ENCODE measurements at regions of chr17 and their contacts with region 1.

Region 1: GRCh38 chr17:82648166-82648668 is at the start of gene WDR45B:
- DNase-seq: peak; percentile 95
- ATAC-seq: peak; percentile 88
- H3K4me3 Mint-ChIP-seq: peak within 1 kb of the TSS; percentile 82
- H3K27ac Mint-ChIP-seq: peak within 1 kb of the TSS; percentile 65
- H3K4me1 Mint-ChIP-seq: peaks cover 24% of the 10 kb centered on the region
- H3K27me3 Mint-ChIP-seq: no peaks in the 10 kb centered on the region
- total RNA-seq, gene WDR45B: 74.1 to 74.8 TPM

Region 2: DNA sequence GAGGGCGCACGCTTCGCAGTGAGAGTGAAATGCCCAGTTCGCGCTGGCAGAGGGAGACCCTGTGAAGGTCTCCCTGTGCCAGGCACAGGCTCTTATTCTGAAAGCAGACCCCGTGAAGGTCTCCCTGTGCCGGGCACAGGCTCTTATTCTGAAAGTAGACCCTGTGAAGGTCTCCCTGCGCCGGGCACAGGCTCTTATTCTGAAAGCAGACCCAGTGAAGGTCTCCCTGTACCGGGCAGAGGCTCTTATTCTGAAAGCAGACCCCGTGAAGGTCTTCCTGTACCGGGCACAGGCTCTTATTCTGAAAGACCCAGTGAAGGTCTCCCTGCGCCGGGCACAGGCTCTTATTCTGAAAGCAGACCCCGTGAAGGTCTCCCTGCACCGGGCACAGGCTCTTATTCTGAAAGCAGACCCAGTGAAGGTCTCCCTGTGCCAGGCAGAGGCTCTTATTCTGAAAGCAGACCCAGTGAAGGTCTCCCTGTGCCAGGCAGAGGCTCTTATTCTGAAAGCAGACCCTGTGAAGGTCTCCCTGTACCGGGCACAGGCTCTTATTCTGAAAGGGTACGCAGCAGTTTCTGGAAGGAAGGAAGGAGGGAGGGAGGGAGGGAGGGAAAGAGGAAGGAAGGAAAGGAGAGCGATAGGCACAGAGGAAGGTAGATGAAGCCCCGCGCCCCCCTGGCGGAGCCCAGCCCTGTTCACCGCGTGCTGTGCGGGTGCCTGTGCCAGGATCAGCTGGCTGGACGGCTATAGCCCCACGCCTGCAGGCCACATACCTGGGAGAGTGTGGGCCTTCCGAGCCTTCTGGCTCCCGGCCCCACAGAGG is 55.2 kb before region 1 on chr17:
- CTCF ChIA-PET with region 1: no interaction called
- POLR2A ChIA-PET with region 1: no interaction called
- intact Hi-C with region 1: loop called (anchors 1 to 5 kb)
- DNase-seq: peak; percentile 76
- ATAC-seq: peak; percentile 25
- H3K4me3 Mint-ChIP-seq: peak overlapping the region; percentile 71
- H3K27ac Mint-ChIP-seq: peak overlapping the region; percentile 98
- H3K4me1 Mint-ChIP-seq: peaks cover 45% of the 10 kb centered on the region
- H3K27me3 Mint-ChIP-seq: no peaks in the 10 kb centered on the region

Region 3: DNA sequence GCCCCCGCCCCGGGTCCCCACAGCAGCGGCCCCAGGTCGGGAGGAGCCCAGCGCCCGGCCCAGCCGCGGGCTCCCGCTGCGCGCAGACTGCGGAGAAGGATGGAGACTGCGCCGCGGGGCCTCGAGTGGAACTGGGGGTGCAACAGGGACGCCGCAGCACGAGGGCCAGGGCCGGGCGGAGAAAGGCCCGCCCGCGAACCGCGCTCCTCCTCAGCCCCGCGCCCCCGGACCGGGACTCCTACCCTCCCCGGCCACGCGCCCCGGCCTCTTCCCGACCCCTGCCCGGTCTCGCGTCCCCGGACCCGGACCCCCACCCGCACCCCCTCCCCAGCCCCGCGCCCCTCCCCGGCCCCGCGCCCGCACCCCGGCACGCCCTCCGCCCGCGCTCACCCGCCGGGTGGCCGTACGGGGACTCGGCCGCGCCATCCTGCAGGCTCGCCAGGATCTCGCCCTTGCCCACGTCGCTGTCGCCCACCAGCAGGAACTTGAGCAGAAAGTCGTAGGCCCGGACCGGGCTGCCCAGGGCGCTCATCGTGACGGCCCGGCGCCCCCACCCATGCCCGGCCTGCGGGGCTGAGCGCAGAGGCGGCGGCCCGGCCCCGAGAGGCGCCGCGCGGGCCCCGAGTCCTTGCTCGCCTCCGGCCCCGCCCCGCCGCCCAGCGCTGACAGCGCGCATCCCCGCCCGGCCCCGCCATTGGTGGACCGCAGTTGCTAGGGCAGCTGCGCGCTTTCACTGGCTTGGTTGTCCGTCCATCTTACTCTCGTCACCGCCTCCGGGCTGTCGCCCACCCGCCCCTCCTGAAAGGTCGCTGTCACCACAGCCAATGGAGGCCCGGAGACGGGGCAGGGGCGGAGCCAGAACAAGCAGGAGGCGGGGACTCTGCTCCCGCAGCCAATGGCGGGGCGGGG is 50.1 kb after region 1 on chr17 and contains the start of gene RAB40B:
- CTCF ChIA-PET with region 1: no interaction called
- POLR2A ChIA-PET with region 1: no interaction called
- intact Hi-C with region 1: loop called (anchors 1 kb)
- DNase-seq: peak; percentile 99
- ATAC-seq: peak; percentile 99
- H3K4me3 Mint-ChIP-seq: peak within 1 kb of the TSS; percentile 67
- H3K27ac Mint-ChIP-seq: peak within 1 kb of the TSS; percentile 51
- H3K4me1 Mint-ChIP-seq: peaks cover 10% of the 10 kb centered on the region
- H3K27me3 Mint-ChIP-seq: peaks cover 3% of the 10 kb centered on the region
- total RNA-seq, gene RAB40B: 3.2 to 4.1 TPM

Region 4: DNA sequence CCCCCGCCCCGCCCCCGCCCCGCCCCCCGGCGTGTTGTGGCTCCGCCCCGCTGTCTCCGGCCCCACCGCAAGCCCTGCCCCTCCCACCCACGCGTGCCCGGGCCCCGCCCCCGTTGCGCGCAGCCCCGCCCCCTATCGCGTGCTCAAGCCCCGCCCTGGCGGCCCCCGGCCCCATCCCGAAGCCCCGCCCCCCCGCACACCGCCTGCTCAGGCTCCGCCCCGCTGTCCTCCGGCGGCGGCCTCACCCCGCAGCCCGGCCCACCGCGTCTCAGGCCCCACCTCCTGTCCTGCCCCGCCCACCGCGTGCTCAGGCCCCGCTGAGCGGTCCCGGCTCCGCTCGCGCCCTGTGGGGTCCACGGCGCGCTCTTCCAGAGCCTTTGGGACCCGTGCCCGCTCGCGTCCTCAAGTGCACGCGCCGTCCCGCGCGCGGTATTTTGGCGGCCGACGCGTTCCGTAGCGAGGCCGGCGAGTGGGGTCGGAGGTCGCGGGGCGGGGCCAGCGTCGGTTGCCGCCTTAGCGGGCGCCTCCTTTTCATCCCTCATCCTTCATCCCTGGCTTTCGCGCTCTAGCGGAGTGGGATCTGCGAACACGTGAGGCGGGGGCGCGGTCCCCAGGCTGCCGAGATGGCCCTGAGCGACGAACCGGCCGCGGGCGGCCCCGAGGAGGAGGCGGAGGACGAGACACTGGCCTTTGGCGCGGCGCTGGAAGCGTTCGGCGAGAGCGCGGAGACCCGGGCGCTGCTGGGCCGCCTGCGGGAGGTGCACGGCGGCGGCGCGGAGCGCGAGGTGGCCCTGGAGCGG is 103.6 kb after region 1 on chr17 and contains the start of gene TBCD:
- CTCF ChIA-PET with region 1: no interaction called
- POLR2A ChIA-PET with region 1: no interaction called
- intact Hi-C with region 1: loop called (anchors 1 to 2 kb)
- DNase-seq: peak; percentile 95
- ATAC-seq: peak; percentile 83
- H3K4me3 Mint-ChIP-seq: peak within 1 kb of the TSS; percentile 84
- H3K27ac Mint-ChIP-seq: peak within 1 kb of the TSS; percentile 13
- H3K4me1 Mint-ChIP-seq: peaks cover 26% of the 10 kb centered on the region
- H3K27me3 Mint-ChIP-seq: no peaks in the 10 kb centered on the region
- total RNA-seq, gene TBCD: 83.3 to 97.2 TPM

Region 5: DNA sequence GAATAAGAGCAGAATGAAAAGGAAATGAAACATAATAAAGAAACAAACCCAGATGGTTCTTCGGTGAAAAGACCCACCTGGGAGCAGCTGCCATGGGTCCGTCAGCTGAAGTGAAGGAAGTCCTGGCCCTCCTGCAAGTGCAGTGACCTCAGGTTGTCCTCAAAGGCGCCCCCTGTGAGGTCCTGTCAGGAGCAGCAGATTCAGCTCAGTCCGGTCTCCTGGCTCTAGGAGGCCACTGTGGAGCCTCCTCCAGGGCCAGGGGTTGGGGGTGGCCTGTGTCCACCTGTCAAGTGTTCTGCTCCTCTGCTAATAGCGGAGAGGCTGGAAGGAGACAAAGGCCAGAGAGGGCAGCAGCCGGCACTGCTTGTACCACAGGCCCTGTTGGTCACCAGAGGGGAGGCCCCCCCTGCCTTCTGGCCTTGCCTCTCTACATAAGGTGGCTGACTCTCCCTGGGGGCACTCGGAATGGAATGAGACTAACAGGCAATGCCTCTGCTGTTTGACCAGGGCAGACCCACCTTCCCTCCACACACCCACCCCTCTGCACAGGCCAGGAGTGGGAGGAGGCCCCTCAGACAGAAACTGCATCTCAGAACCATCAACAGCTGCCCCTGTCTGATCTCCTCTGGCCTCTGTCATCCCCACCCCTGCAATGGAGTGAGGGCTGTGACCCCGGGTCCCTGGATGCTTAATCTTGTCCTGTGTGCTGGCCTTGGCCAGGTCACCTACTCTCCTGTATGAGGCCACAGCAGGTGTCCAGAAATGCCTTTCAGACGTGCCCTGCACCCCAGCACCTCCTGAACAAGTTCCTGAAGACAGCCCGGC is 298.8 kb after region 1 on chr17:
- CTCF ChIA-PET with region 1: no interaction called
- POLR2A ChIA-PET with region 1: no interaction called
- intact Hi-C with region 1: no loop called
- DNase-seq: no peak
- ATAC-seq: no peak
- H3K4me3 Mint-ChIP-seq: no peak overlapping the region
- H3K27ac Mint-ChIP-seq: no peak overlapping the region
- H3K4me1 Mint-ChIP-seq: no peaks in the 10 kb centered on the region
- H3K27me3 Mint-ChIP-seq: no peaks in the 10 kb centered on the region

Region 6: GRCh38 chr17:83079352-83079747 is 431.1 kb after region 1 on chr17 and contains the start of gene METRNL:
- CTCF ChIA-PET with region 1: no interaction called
- POLR2A ChIA-PET with region 1: no interaction called
- intact Hi-C with region 1: loop called in 1 of 2 experiments (anchors 2 kb)
- DNase-seq: peak; percentile 82
- ATAC-seq: peak; percentile 21
- H3K4me3 Mint-ChIP-seq: peak within 1 kb of the TSS; percentile 41
- H3K27ac Mint-ChIP-seq: no peak within 1 kb of the TSS
- H3K4me1 Mint-ChIP-seq: peaks cover 26% of the 10 kb centered on the region
- H3K27me3 Mint-ChIP-seq: peaks cover 7% of the 10 kb centered on the region
- total RNA-seq, gene METRNL: 22.4 to 26.3 TPM